ENCODE measurements at regions of chr17 and their contacts with region 1.

Region 1: DNA sequence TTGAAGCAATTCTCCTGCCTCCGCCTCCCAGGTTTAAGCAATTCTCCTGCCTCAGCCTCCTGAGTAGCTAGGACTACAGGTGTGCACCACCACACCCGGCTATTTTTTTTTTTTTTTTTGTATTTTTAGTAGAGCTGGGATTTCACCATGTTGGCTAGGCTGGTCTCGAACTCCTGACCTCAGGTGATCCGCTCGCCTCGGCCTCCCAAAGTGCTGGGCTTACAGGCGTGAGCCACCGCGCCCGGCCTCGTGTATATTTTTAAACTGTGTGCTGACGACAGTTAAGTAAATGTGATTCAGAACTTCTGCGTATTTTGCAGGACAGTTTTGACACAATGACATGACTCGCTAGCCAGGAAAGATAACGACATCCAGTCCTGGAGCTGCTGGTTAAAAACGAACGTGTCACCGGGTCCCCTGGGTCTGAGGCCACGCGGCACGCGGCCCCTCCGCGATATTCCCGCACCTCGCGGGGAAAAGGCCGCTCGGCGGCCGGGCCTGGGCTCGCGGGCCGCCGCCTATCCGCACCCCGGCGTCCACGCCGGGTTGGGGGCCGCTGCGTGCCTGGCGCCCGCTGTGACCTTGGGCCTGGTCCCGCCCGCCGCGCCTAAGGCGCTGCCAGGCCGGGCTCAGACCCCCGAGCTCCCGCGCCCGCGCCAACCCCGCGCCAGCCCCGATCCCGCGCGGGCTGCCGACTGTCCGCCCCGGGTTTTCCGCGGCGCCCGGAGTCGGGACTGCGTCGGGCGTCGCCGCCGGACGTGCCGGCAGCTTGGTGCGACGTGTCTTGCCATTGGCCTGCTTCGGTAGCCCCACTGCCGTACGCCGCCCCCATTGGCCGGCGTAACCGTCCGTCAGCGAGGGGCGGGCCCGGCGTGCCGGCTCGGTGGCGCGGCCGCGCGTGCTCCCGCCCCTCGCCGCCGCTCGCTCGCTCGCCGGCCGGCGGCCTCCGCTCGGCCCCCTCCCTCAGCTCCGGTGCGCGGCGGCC is at the start of gene FOXK2:
- DNase-seq: peak; percentile 95
- ATAC-seq: peak; percentile 98
- H3K4me3 Mint-ChIP-seq: peak within 1 kb of the TSS; percentile 88
- H3K27ac Mint-ChIP-seq: peak within 1 kb of the TSS; percentile 92
- H3K4me1 Mint-ChIP-seq: peaks cover 24% of the 10 kb centered on the region
- H3K27me3 Mint-ChIP-seq: no peaks in the 10 kb centered on the region
- total RNA-seq, gene FOXK2: 58.1 to 75.4 TPM

Region 2: GRCh38 chr17:82273327-82274133 is 245.6 kb before region 1 on chr17 and contains the start of gene CSNK1D:
- CTCF ChIA-PET with region 1: no interaction called
- POLR2A ChIA-PET with region 1: no interaction called
- intact Hi-C with region 1: loop called in 1 of 2 experiments (anchors 1 kb)
- DNase-seq: peak; percentile 96
- ATAC-seq: peak; percentile 81
- H3K4me3 Mint-ChIP-seq: peak within 1 kb of the TSS; percentile 90
- H3K27ac Mint-ChIP-seq: peak within 1 kb of the TSS; percentile 94
- H3K4me1 Mint-ChIP-seq: peaks cover 39% of the 10 kb centered on the region
- H3K27me3 Mint-ChIP-seq: no peaks in the 10 kb centered on the region
- total RNA-seq, gene CSNK1D: 118 to 182 TPM

Region 3: GRCh38 chr17:82411396-82412053 is 107.6 kb before region 1 on chr17:
- CTCF ChIA-PET with region 1: no interaction called
- POLR2A ChIA-PET with region 1: no interaction called
- intact Hi-C with region 1: no loop called
- DNase-seq: no peak
- ATAC-seq: no peak
- H3K4me3 Mint-ChIP-seq: no peak overlapping the region
- H3K27ac Mint-ChIP-seq: no peak overlapping the region
- H3K4me1 Mint-ChIP-seq: peaks cover 15% of the 10 kb centered on the region
- H3K27me3 Mint-ChIP-seq: no peaks in the 10 kb centered on the region

Region 4: DNA sequence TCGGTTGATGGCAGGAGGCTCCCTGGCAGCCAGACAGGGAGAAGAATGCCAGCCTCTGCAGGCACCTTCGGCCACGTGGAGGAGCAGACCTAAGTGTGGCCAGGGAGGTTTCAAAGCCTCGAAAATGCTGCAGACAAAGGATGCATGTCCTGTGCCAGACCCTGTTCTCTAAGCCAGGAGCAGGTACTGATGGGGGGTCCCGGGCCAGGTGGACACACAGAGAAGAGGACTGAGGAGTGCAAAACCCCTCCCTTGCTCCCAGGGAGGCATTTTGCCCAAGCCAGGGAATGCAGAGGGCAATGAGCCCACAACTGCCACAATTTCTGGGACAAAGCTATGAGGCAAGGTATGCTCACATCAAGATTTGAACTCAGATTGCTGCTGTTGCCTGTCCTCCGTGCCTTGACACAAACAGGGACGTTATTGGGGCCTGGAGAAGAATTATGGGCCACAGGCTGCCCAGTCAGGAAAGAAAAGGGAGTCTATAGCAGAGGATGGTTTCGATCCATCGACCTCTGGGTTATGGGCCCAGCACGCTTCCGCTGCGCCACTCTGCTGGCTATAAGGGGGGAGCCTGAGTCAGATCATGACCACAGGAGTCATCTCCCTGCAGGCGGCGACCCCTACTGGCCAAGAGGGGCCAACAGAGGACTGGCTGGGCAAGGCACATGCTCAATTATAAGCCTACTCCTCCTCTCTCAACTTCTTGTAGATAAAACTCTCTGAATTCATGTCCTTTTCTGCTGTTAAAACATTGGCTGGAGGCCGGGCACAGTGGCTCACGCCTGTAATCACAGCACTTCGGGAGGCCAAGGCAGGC is 24.7 kb before region 1 on chr17:
- CTCF ChIA-PET with region 1: interaction called, 3 read pairs
- POLR2A ChIA-PET with region 1: interaction called, 4 read pairs
- intact Hi-C with region 1: loop called (anchors 1 kb)
- DNase-seq: peak; percentile 93
- ATAC-seq: peak; percentile 80
- H3K4me3 Mint-ChIP-seq: peak overlapping the region; percentile 60
- H3K27ac Mint-ChIP-seq: peak overlapping the region; percentile 76
- H3K4me1 Mint-ChIP-seq: peaks cover 14% of the 10 kb centered on the region
- H3K27me3 Mint-ChIP-seq: no peaks in the 10 kb centered on the region

Region 5: DNA sequence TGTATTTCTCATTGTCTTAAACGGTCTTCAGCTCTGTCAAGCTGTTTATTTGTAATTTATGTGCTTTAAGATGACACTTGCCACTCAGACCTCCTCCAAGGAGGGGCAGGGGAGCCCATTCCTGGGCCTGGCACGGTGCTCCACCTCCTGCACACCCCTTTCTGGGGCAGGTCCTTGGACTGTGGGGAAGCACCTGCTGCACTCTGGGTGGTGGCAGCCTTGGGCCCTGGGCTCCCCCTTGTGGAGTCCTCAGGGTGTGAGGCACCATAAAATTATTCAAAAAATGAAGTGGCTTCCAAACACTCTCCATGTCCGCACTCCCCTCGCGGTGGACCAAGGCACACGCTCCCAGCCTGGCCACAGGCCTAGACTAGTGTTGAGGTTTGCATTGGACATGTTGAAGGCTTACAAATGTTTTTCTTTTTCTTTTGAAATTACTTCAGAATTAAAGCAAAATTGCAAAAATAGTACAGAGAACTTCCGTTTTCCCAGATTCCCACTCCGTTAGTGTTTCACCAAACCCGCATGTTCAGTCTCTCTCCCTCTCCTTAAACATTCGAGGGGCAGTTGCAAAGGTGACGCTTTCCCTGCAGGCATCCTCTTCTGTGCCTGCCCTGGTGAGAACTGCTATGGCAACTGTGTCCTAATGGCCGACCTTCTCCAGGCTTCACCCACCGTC is 32.8 kb after region 1 on chr17:
- CTCF ChIA-PET with region 1: interaction called, 4 read pairs
- POLR2A ChIA-PET with region 1: no interaction called
- intact Hi-C with region 1: loop called (anchors 1 to 5 kb)
- DNase-seq: peak; percentile 90
- ATAC-seq: peak; percentile 100
- H3K4me3 Mint-ChIP-seq: no peak overlapping the region
- H3K27ac Mint-ChIP-seq: peak overlapping the region; percentile 56
- H3K4me1 Mint-ChIP-seq: peaks cover 41% of the 10 kb centered on the region
- H3K27me3 Mint-ChIP-seq: no peaks in the 10 kb centered on the region

Region 6: DNA sequence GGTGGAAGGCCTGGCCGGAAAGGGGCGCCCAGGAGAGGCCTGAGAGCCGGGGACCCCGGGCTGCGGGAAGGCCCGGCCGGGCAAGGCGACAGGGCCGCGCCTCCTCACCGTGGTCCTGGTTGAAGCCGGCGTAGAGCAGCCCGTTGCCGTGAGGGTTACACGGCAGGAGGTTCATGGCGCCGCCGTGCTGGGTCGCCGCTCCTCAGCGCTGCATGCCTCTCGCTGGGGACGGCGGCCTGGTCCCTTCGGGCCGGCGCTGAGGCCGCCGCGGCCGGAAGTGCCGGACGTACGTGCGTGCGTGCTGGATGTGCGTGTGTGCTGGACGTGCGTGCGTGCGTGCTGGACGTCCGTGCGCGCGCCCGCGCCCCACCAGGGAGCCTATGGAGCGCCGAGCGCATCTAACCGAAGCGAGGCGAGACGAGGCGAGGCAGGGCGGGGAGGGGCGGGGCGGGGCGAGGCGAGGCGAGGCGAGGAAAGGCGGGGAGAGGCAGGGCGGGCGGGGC is 129.1 kb after region 1 on chr17 and contains the start of gene WDR45B:
- CTCF ChIA-PET with region 1: no interaction called
- POLR2A ChIA-PET with region 1: no interaction called
- intact Hi-C with region 1: loop called in 1 of 2 experiments (anchors 1 kb)
- DNase-seq: peak; percentile 95
- ATAC-seq: peak; percentile 88
- H3K4me3 Mint-ChIP-seq: peak within 1 kb of the TSS; percentile 82
- H3K27ac Mint-ChIP-seq: peak within 1 kb of the TSS; percentile 65
- H3K4me1 Mint-ChIP-seq: peaks cover 24% of the 10 kb centered on the region
- H3K27me3 Mint-ChIP-seq: no peaks in the 10 kb centered on the region
- total RNA-seq, gene WDR45B: 74.1 to 74.8 TPM

Region 7: GRCh38 chr17:83051395-83052233 is 532.5 kb after region 1 on chr17:
- CTCF ChIA-PET with region 1: no interaction called
- POLR2A ChIA-PET with region 1: no interaction called
- intact Hi-C with region 1: loop called in 1 of 2 experiments (anchors 1 kb)
- DNase-seq: peak; percentile 99
- ATAC-seq: peak; percentile 89
- H3K4me3 Mint-ChIP-seq: peak overlapping the region; percentile 85
- H3K27ac Mint-ChIP-seq: peak overlapping the region; percentile 86
- H3K4me1 Mint-ChIP-seq: peaks cover 37% of the 10 kb centered on the region
- H3K27me3 Mint-ChIP-seq: no peaks in the 10 kb centered on the region

Measured in activated CD4-positive, alpha-beta T cell treated with anti-CD3 and anti-CD28 coated beads for 36 hours (primary cell).